HCT116 (cell line): ENCODE measurements at regions of chr9 and their contacts with region 1.

Region 1: GRCh38 chr9:109469646-109470358 is 28.3 kb downstream of the PTPN3 start:
- DNase-seq: peak; percentile 61
- ATAC-seq: peak; percentile 99
- H3K4me3 ChIP-seq: no peak overlapping the region
- H3K27ac ChIP-seq: no peak overlapping the region
- H3K4me1 ChIP-seq: peaks cover 2 to 28% of the 10 kb centered on the region in 2 experiments; a peak in 3 of 4 replicates
- H3K27me3 ChIP-seq: no peaks in the 10 kb centered on the region
- CTCF ChIP-seq: peak; percentile 80 to 93 (median 92)
- POLR2A ChIP-seq: no peak
- RAD21 ChIP-seq: peak; percentile 83

Region 2: DNA sequence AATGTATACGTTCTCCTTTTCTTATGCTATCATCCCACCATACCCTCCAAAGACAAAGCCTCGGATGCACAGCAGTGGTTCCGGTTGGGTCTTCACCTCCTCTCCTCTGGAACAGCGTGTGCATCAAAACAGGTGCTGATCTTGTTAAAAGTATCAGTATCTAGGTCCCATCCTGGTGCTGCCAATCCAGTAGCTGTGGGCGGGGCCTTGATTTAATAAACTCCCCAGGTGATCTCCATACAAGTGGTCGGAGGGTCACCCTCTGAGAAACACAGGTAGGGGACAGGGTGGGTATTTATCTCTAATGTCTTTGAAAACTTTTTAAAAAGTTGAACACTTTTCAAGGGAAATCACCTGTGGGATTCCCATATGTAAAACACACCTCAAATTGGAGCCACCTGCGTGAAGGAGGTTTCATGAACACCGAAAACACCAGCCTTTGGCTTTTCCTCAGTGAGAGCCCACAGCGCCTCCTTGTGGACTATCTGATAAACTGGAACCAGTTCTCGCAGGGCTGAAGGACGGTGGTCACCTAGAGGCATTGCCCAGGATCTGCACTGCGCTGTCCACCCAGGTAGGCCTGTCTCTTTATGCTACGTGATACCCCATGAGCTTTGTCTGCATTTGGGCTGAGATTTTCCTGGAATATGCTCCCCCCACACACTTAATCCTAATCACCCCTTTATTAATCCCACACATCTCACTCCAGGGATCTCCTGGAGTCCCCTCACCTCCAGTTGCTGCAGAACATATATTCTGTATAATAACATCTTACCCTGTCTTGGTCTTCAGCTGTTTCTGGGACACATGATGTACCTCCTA is 68.4 kb before region 1 on chr9:
- CTCF ChIA-PET with region 1: interaction called, 3 read pairs
- POLR2A ChIA-PET with region 1: no interaction called
- RAD21 ChIA-PET with region 1: no interaction called
- intact Hi-C with region 1: loop called (anchors 5 kb)
- DNase-seq: peak; percentile 49
- ATAC-seq: peak; percentile 99
- H3K4me3 ChIP-seq: no peak overlapping the region
- H3K27ac ChIP-seq: no peak overlapping the region
- H3K4me1 ChIP-seq: no peaks in the 10 kb centered on the region
- H3K27me3 ChIP-seq: no peaks in the 10 kb centered on the region
- CTCF ChIP-seq: peak; percentile 82 to 93 (median 82)
- POLR2A ChIP-seq: no peak
- RAD21 ChIP-seq: peak; percentile 71

Region 3: DNA sequence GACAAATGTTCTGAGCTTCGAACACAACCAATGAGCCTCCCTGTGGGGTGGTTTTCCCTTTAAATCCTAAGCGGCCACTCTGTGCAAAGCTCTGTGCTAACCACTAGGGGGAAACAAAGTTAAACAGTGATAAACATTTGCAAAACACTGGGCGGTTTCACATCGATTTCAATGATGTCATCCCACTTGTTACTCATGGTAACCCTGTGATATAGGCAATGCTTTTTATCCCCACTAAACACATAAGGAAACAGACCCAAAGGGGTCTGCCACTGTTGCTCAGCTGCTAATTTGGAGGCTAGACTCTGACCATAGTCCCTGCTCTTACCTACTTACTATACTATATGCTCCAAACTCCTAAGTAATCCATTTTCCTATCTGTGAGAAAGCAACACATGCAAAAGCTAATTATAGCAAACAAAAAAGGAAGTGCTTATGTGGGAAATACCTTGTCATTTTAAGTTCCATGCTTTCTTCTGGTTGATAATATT is 29.0 kb before region 1 on chr9:
- CTCF ChIA-PET with region 1: interaction called, 17 read pairs
- POLR2A ChIA-PET with region 1: no interaction called
- RAD21 ChIA-PET with region 1: interaction called in 1 of 2 experiments, 4 read pairs
- intact Hi-C with region 1: no loop called
- DNase-seq: peak; percentile 67
- ATAC-seq: peak; percentile 95
- H3K4me3 ChIP-seq: no peak overlapping the region
- H3K27ac ChIP-seq: no peak overlapping the region
- H3K4me1 ChIP-seq: peaks cover 0 to 8% of the 10 kb centered on the region in 2 experiments; a peak in 2 of 4 replicates
- H3K27me3 ChIP-seq: no peaks in the 10 kb centered on the region
- CTCF ChIP-seq: peak; percentile 77 to 81 (median 79)
- POLR2A ChIP-seq: no peak
- RAD21 ChIP-seq: peak; percentile 85

Region 4: GRCh38 chr9:109453210-109453842 is 16.5 kb before region 1 on chr9:
- CTCF ChIA-PET with region 1: interaction called, 5 read pairs
- POLR2A ChIA-PET with region 1: no interaction called
- RAD21 ChIA-PET with region 1: no interaction called
- intact Hi-C with region 1: loop called (anchors 1 kb)
- DNase-seq: no peak
- ATAC-seq: no peak
- H3K4me3 ChIP-seq: no peak overlapping the region
- H3K27ac ChIP-seq: no peak overlapping the region
- H3K4me1 ChIP-seq: no peaks in the 10 kb centered on the region
- H3K27me3 ChIP-seq: no peaks in the 10 kb centered on the region
- CTCF ChIP-seq: no peak
- POLR2A ChIP-seq: no peak
- RAD21 ChIP-seq: no peak

Region 5: DNA sequence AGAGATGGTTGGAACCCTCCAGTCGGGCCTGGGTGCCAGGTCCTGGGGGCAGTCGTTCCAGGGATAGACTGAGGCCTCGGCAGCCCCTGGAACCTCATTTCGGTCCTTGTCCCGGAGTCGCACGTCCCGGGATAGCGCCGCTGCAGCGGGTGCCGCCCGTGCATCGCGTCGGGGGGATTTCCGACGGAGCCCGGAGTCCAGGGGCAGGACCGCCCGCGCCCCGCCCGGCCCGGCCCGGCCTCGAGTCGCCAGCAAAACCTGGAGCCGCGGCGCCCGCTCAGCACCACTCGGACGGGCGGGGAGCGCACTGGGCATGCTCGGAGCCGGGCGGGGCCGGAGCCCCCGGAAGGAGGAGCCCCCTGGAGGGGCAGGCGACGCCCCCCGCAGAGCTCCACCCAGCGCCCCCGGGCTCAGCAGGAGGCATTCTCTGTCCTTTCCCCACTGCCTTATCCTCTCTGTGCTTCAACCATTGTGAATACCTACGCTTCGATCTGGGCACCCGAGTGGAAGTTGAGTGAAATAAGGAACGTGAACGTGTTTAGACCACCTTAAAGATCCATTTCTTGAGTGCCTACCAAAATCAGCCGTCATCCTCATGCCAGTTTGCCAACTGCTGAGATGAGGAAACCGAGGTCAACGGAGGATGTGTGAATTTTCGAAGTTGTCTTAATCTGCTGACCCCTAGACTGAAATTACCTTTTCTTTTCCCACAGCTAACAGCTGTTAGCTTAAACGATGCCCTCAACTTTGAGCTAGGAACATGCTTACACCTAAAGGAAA is 30.0 kb after region 1 on chr9:
- CTCF ChIA-PET with region 1: interaction called, 16 read pairs
- POLR2A ChIA-PET with region 1: interaction called, 4 read pairs
- RAD21 ChIA-PET with region 1: no interaction called
- intact Hi-C with region 1: no loop called
- DNase-seq: no peak
- ATAC-seq: peak; percentile 81
- H3K4me3 ChIP-seq: peak overlapping the region; percentile 47 to 55
- H3K27ac ChIP-seq: no peak overlapping the region; the same call in 1 of the 2 replicates
- H3K4me1 ChIP-seq: peaks cover 21 to 28% of the 10 kb centered on the region in 2 experiments; a peak in 3 of 4 replicates
- H3K27me3 ChIP-seq: no peaks in the 10 kb centered on the region
- CTCF ChIP-seq: no peak
- POLR2A ChIP-seq: no peak
- RAD21 ChIP-seq: no peak